ENCODE measurements at regions of chr21 and their contacts with region 1.

Region 1: GRCh38 chr21:39137248-39138178 is 45.7 kb downstream of the PSMG1 start:
- DNase-seq: peak in 1 of 2 experiments; percentile 64
- H3K4me3 ChIP-seq: no peak overlapping the region
- H3K27ac ChIP-seq: no peak overlapping the region
- H3K4me1 ChIP-seq: peaks cover 0 to 12% (median 7%) of the 10 kb centered on the region in 4 experiments; a peak in 6 of 7 replicates
- H3K27me3 ChIP-seq: no peaks in the 10 kb centered on the region
- CTCF ChIP-seq: peak in 1 of 3 experiments; percentile 35; a peak in 1 of 4 replicates
- EP300 ChIP-seq: no peak
- POLR2A ChIP-seq: no peak
- RAD21 ChIP-seq: peak; percentile 23 to 28; a peak in 2 of 4 replicates

Region 2: GRCh38 chr21:38733973-38734546 is 403.5 kb before region 1 on chr21:
- CTCF ChIA-PET with region 1: interaction called, 12 read pairs
- POLR2A ChIA-PET with region 1: no interaction called
- DNase-seq: peak; percentile 54 to 100
- H3K4me3 ChIP-seq: peak overlapping the region in 3 of 4 experiments; percentile 26 to 48 (median 48); a peak in 6 of 8 replicates
- H3K27ac ChIP-seq: peak overlapping the region; percentile 48
- H3K4me1 ChIP-seq: peaks cover 0 to 2% (median 0%) of the 10 kb centered on the region in 4 experiments; a peak in 1 of 7 replicates
- H3K27me3 ChIP-seq: no peaks in the 10 kb centered on the region
- CTCF ChIP-seq: peak; percentile 87 to 93 (median 87)
- EP300 ChIP-seq: no peak
- POLR2A ChIP-seq: no peak
- RAD21 ChIP-seq: peak; percentile 93 to 94

Region 3: DNA sequence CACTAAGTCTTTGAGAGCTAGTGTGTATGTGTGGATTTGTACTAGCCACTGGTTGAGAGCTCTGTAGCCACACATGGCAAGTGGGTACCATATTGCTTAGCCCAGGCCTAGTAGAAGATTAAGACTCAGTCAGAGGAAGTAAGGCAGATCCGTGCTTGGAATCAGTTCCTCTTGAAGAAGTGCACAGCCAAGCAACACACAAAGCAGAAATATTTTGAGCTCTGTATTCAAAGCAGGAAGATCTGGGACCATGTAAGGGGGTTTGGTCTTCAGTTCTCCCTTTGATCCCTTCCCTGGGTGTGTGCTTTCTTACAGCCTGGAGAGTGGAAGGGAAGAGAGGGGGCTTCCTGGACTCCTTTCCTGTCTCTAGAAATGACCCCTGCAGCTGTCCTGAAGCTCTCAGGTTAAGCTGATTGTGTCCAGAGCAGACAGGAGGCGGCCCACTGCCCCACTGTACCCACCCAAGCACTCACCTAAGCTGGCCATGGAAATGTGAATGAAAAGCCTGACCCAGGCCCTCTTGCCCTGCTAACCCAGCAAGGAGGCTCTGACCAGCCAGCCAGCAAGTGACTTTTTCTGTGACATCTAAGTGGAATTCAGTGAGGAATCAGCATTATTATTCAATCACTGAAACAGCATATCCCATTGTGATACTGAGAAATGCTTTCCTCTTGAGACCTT is 328.2 kb before region 1 on chr21:
- CTCF ChIA-PET with region 1: interaction called, 10 read pairs
- POLR2A ChIA-PET with region 1: no interaction called
- DNase-seq: peak in 1 of 2 experiments; percentile 37
- H3K4me3 ChIP-seq: no peak overlapping the region
- H3K27ac ChIP-seq: peak overlapping the region; percentile 51; the same call in 1 of the 2 replicates
- H3K4me1 ChIP-seq: peaks cover 19 to 39% (median 29%) of the 10 kb centered on the region in 4 experiments
- H3K27me3 ChIP-seq: peaks cover 0 to 6% (median 3%) of the 10 kb centered on the region in 4 experiments; a peak in 3 of 7 replicates
- CTCF ChIP-seq: no peak
- EP300 ChIP-seq: no peak
- POLR2A ChIP-seq: no peak
- RAD21 ChIP-seq: no peak

Region 4: DNA sequence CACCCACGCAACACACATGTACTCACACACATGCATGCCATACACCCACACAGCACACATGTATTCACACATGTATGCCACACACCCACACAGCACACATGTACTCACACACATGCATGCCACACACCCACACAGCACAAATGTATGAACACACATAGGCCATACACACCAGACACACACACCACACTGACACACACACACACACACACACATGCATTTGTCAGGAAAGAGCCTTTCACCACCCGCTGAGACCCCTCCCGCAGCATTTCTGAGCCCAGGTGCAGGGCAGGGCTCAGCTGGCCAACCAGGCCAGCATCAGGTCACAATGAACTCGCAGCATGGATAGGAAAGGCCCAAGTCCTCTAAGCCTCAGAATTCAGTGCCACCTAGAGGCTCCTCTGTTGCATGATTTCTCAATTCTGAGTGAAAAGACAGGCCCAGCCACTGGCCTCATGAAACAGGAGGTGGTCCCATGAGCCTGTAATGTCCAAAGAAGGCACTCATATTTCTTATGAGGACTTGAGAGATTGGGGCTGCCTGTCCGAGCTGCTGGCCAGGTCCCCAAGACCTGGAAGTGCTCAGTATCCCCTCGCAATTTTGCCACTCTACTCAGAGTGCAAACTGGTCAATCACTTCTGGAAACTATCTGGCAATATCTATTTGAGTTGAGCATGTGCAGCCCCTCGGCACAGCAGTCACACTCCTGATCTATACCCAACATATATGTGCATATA is 11.6 kb before region 1 on chr21:
- CTCF ChIA-PET with region 1: interaction called, 14 read pairs
- POLR2A ChIA-PET with region 1: no interaction called
- DNase-seq: peak; percentile 44 to 69
- H3K4me3 ChIP-seq: no peak overlapping the region
- H3K27ac ChIP-seq: no peak overlapping the region
- H3K4me1 ChIP-seq: peaks cover 0 to 4% (median 2%) of the 10 kb centered on the region in 4 experiments; a peak in 5 of 7 replicates
- H3K27me3 ChIP-seq: no peaks in the 10 kb centered on the region
- CTCF ChIP-seq: peak; percentile 36 to 73 (median 67)
- EP300 ChIP-seq: peak in 1 of 2 experiments; percentile 18; a peak in 1 of 3 replicates
- POLR2A ChIP-seq: no peak
- RAD21 ChIP-seq: peak; percentile 82 to 84